IMR-90 (cell line): ENCODE measurements at regions of chr6 and their contacts with region 1.

Region 1: GRCh38 chr6:158213925-158214674 is 46.0 kb downstream of the GTF2H5 start:
- DNase-seq: peak; percentile 83
- ATAC-seq: peak; percentile 99
- H3K4me3 ChIP-seq: no peak overlapping the region
- H3K27ac ChIP-seq: no peak overlapping the region
- H3K4me1 ChIP-seq: peaks cover 2% of the 10 kb centered on the region
- H3K27me3 ChIP-seq: no peaks in the 10 kb centered on the region
- CTCF ChIP-seq: peak; percentile 87
- POLR2A ChIP-seq: no peak
- RAD21 ChIP-seq: peak; percentile 86

Region 2: GRCh38 chr6:158605266-158605878 is 391.3 kb after region 1 on chr6:
- CTCF ChIA-PET with region 1: interaction called, 12 read pairs
- POLR2A ChIA-PET with region 1: no interaction called
- dilution Hi-C with region 1: no loop called
- in situ Hi-C with region 1: no loop called
- intact Hi-C with region 1: loop called (anchors 1 kb)
- DNase-seq: peak; percentile 77
- ATAC-seq: peak; percentile 99
- H3K4me3 ChIP-seq: no peak overlapping the region
- H3K27ac ChIP-seq: no peak overlapping the region
- H3K4me1 ChIP-seq: no peaks in the 10 kb centered on the region
- H3K27me3 ChIP-seq: no peaks in the 10 kb centered on the region
- CTCF ChIP-seq: peak; percentile 77
- POLR2A ChIP-seq: no peak
- RAD21 ChIP-seq: peak; percentile 84

Region 3: GRCh38 chr6:158697811-158698210 is 483.7 kb after region 1 on chr6:
- CTCF ChIA-PET with region 1: interaction called, 4 read pairs
- POLR2A ChIA-PET with region 1: no interaction called
- dilution Hi-C with region 1: no loop called
- in situ Hi-C with region 1: loop called (anchors 10 kb)
- intact Hi-C with region 1: no loop called
- DNase-seq: peak; percentile 72
- ATAC-seq: peak; percentile 88
- H3K4me3 ChIP-seq: no peak overlapping the region
- H3K27ac ChIP-seq: no peak overlapping the region
- H3K4me1 ChIP-seq: peaks cover 5% of the 10 kb centered on the region
- H3K27me3 ChIP-seq: no peaks in the 10 kb centered on the region
- CTCF ChIP-seq: no peak
- POLR2A ChIP-seq: no peak
- RAD21 ChIP-seq: no peak

Region 4: DNA sequence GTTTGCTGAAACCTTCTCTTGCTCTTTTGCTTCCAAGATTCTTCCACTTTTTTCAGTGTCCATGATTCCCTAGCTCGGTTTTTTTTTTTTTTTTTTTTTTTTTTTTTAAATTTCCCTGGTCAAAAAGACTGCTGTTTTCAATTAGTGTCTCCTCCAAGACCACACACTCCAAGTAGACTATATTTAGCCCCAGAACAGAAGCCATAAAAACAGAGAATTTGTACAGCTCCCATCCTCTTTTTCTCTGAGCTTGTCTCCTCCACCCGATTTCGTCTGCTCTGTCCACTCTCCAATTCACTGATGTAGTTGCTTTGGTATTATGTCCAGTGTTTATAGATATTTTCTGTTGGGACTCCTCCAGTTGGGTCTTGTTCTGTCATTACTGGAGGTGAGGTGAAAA is 748.3 kb after region 1 on chr6:
- CTCF ChIA-PET with region 1: no interaction called
- POLR2A ChIA-PET with region 1: no interaction called
- dilution Hi-C with region 1: no loop called
- in situ Hi-C with region 1: loop called (anchors 10 kb)
- intact Hi-C with region 1: no loop called
- DNase-seq: no peak
- ATAC-seq: no peak
- H3K4me3 ChIP-seq: no peak overlapping the region
- H3K27ac ChIP-seq: no peak overlapping the region
- H3K4me1 ChIP-seq: no peaks in the 10 kb centered on the region
- H3K27me3 ChIP-seq: no peaks in the 10 kb centered on the region
- CTCF ChIP-seq: no peak
- POLR2A ChIP-seq: no peak
- RAD21 ChIP-seq: no peak